SK-N-SH (cell line): ENCODE measurements at regions of chr20 and their contacts with region 1.

Region 1: DNA sequence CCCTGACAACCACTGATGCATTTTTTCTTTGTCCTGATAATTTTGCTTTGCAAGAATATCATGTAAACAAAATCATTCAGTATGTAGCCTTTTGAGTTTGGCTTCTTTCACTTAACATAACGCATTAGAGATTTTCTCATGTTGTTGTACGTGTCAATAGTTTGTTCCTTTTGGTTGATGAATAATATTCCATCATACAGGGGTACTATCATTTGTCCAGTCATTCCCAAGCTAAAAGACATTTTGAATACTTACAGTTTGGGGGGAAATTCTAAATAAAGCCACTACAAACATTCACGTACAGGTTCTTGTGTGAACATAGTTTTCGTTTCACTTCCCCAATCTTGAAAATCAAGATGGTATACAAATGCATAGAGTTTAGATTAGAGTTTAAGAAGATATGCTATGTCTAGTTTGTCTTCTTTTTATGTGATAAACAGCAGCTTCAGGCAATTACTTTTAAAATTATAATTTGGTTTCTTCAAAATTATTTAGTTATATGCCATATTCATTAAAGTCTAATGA is 5.2 kb downstream of the HAO1 start:
- DNase-seq: no peak
- H3K4me3 ChIP-seq: no peak overlapping the region
- H3K27ac ChIP-seq: no peak overlapping the region
- H3K4me1 ChIP-seq: peaks cover 0 to 4% of the 10 kb centered on the region in 2 experiments; a peak in 2 of 4 replicates
- H3K27me3 ChIP-seq: 0 out of 2 replicates have a peak, but pooled peaks cover 9% of the 10 kb centered on the region
- CTCF ChIP-seq: no peak
- EP300 ChIP-seq: no peak
- RAD21 ChIP-seq: no peak

Region 2: DNA sequence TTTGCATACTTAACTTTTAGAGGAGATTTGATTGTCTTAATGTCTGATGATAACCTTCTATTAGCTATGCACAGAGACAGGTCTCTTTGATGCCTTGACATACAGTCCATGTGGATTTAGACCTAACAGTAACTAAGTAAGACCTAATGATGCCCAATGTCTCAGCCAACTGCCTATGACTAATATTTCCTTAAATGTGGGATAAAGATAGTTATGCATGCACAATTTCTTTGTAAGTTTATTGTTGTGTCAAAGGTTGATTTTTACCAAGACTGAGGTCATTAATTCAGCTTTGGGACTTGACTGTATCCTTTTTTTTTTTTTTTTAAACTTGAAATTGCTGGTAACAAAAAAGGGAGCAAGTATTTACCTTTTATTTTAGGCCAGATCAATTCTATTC is 444.8 kb before region 1 on chr20:
- CTCF ChIA-PET with region 1: no interaction called
- POLR2A ChIA-PET with region 1: no interaction called
- DNase-seq: no peak
- H3K4me3 ChIP-seq: no peak overlapping the region
- H3K27ac ChIP-seq: no peak overlapping the region
- H3K4me1 ChIP-seq: no peaks in the 10 kb centered on the region
- H3K27me3 ChIP-seq: no peaks in the 10 kb centered on the region
- CTCF ChIP-seq: no peak
- EP300 ChIP-seq: no peak
- RAD21 ChIP-seq: no peak

Region 3: DNA sequence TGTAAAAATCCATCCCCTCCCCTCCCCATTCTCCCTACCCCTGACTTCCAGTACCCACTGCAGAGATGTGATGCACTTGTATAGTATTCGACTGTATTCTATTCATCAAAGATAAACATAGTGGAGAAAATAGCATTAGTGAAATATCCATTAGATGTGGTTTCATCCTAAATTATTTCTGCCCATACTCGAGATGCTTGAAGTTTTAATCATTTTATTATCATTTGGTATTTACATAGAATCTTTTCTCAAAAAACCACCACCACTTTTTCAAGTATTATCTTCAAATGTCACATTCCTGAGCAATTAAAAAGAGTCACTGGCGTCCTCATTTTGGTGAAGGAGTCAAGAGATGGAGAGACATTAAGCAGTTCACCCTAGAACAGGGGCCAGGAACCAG is 176.7 kb before region 1 on chr20:
- CTCF ChIA-PET with region 1: no interaction called
- POLR2A ChIA-PET with region 1: no interaction called
- DNase-seq: no peak
- H3K4me3 ChIP-seq: no peak overlapping the region
- H3K27ac ChIP-seq: no peak overlapping the region
- H3K4me1 ChIP-seq: no peaks in the 10 kb centered on the region
- H3K27me3 ChIP-seq: no peaks in the 10 kb centered on the region; the same call in 1 of the 2 replicates
- CTCF ChIP-seq: no peak
- EP300 ChIP-seq: no peak
- RAD21 ChIP-seq: no peak

Region 4: GRCh38 chr20:7967199-7967844 is 32.2 kb after region 1 on chr20:
- CTCF ChIA-PET with region 1: interaction called, 17 read pairs
- POLR2A ChIA-PET with region 1: no interaction called
- DNase-seq: no peak
- H3K4me3 ChIP-seq: no peak overlapping the region
- H3K27ac ChIP-seq: peak overlapping the region in 1 of 2 experiments; percentile 76; a peak in 2 of 4 replicates
- H3K4me1 ChIP-seq: peaks cover 0 to 3% of the 10 kb centered on the region in 2 experiments; a peak in 2 of 4 replicates
- H3K27me3 ChIP-seq: no peaks in the 10 kb centered on the region
- CTCF ChIP-seq: no peak
- EP300 ChIP-seq: no peak
- RAD21 ChIP-seq: no peak

Region 5: DNA sequence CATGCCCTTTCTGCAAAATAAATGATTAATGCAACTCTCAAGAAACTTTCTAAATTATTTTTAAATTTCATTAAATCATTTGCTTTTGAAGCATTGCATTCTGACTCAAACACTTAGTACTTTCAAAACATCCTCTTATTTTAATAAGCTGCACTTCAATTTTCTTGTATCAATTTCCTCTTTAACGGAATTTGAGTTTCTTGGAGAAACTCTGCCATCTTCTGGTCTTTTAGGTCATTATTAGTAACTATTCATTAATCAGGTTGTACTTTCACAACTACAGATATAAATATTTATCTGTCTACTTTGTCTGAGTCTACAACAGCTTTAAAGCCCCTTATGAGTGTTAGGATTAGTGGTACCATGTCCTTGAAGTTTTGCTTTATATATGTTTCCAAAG is 54.3 kb after region 1 on chr20:
- CTCF ChIA-PET with region 1: interaction called, 36 read pairs
- POLR2A ChIA-PET with region 1: no interaction called
- DNase-seq: no peak
- H3K4me3 ChIP-seq: no peak overlapping the region
- H3K27ac ChIP-seq: no peak overlapping the region
- H3K4me1 ChIP-seq: no peaks in the 10 kb centered on the region; a peak in 1 of 4 replicates
- H3K27me3 ChIP-seq: no peaks in the 10 kb centered on the region
- CTCF ChIP-seq: peak; percentile 29
- EP300 ChIP-seq: no peak
- RAD21 ChIP-seq: peak; percentile 33; the same call in 1 of the 2 replicates

Region 6: GRCh38 chr20:8019246-8019997 is 84.3 kb after region 1 on chr20 and contains the start of gene TMX4:
- CTCF ChIA-PET with region 1: interaction called, 15 read pairs
- POLR2A ChIA-PET with region 1: no interaction called
- DNase-seq: peak; percentile 96
- H3K4me3 ChIP-seq: peak within 1 kb of the TSS; percentile 82 to 93
- H3K27ac ChIP-seq: peak within 1 kb of the TSS; percentile 84 to 98
- H3K4me1 ChIP-seq: peaks cover 16 to 18% of the 10 kb centered on the region in 2 experiments; a peak in 3 of 4 replicates
- H3K27me3 ChIP-seq: no peaks in the 10 kb centered on the region
- CTCF ChIP-seq: peak; percentile 52
- EP300 ChIP-seq: peak; percentile 5 to 77; a peak in 2 of 4 replicates
- RAD21 ChIP-seq: peak; percentile 18; the same call in 1 of the 2 replicates
- polyA plus RNA-seq, gene TMX4: 10.9 and 14.6 TPM in 2 replicates

Region 7: DNA sequence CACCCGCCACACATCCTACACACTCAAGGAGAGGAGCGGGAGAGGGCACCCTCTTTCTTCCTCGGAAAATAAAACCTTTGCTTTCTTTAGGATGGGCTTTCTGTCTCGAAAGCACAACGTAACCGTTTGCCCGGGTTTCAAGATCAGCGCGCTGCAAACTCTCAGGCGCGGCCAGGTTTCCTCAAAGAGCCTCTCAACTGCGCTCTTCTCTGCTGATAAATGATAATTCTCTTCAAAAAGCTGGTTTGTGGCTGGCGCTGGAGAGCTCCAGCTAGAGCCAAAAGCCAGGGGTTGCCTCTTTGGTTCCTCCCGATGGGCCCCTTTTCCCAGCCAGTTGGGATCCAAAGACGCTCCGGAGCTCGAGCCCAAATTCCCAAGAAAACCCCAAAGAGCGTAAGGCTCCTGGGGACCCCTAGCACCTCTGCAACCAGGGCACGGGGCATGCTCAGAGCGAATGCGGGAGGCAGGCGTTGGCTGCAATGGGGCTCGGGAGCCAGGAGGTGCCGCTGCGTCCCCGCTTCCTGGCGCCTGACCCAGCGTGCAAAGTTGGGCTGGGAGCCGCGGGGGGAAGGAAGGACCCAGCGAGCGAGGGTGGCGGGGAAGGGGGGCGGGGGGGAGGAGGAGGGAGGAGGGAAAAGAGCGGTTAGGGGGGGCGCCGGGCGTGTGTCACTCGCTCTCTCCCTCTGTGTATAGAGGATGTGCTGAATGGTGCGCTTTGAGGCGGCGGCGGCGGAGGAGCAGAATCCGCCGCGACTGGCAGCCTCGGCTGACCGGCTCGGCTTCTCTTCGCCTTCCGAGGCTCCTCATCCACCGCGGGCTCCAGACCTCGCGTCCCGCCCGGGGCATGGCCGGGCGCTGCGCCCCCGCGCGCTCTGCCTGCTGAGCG is 196.8 kb after region 1 on chr20 and contains the start of gene PLCB1:
- CTCF ChIA-PET with region 1: interaction called, 10 read pairs
- POLR2A ChIA-PET with region 1: interaction called, 4 read pairs
- DNase-seq: peak; percentile 96
- H3K4me3 ChIP-seq: peak within 1 kb of the TSS; percentile 82 to 84
- H3K27ac ChIP-seq: peak within 1 kb of the TSS; percentile 50 to 86; a peak in 3 of 4 replicates
- H3K4me1 ChIP-seq: peaks cover 17% of the 10 kb centered on the region in 2 experiments; a peak in 3 of 4 replicates
- H3K27me3 ChIP-seq: no peaks in the 10 kb centered on the region
- CTCF ChIP-seq: peak; percentile 82
- EP300 ChIP-seq: 0 out of 4 replicates have a peak, but pooled peaks of 1 of the 2 experiments have one; percentile 12
- RAD21 ChIP-seq: peak; percentile 90
- polyA plus RNA-seq, gene PLCB1: 10.5 and 13.0 TPM in 2 replicates